ENCODE measurements at regions of chr17 and their contacts with region 1.

Region 1: GRCh38 chr17:17237026-17237799 is at the start of gene FLCN:
- DNase-seq: peak; percentile 89
- ATAC-seq: peak; percentile 90
- H3K4me3 Mint-ChIP-seq: peak within 1 kb of the TSS; percentile 96
- H3K27ac Mint-ChIP-seq: peak within 1 kb of the TSS; percentile 99
- H3K4me1 Mint-ChIP-seq: peaks cover 14% of the 10 kb centered on the region
- H3K27me3 Mint-ChIP-seq: no peaks in the 10 kb centered on the region
- CTCF ChIP-seq: no peak
- total RNA-seq, gene FLCN: 54.5 and 62.3 TPM in 2 replicates

Region 2: DNA sequence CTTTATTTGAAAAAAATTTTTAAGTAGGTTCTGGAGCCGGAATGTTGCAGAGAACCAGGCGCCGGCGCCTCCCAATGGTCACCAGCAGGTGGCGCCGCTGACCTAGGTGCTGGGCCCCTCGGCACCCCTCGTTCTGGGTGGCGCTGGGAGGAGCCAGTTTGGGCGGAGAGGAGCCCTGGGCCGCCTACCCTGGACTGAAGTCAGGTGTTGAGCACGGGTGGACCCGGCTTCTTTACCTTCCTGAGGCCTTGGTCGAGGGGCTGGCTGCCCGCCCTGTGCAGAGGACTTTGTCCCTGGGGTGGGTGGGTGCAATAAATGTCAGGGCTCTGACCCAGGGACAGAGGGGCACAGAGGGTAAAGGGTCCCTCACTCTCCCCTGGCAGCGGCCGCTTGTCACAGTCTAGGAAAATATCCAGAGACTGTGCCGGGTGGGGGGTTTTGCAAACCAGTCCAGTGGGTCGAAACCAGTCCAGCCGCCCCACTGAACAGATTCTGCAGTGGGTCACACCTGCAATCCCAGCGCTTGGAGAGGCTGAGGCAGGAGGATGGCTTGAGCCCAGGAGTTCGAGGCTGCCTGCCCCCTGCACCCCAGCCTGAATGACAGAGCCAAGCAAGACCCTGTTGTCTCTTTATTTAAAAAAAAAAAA is 235.2 kb before region 1 on chr17:
- CTCF ChIA-PET with region 1: no interaction called
- POLR2A ChIA-PET with region 1: no interaction called
- intact Hi-C with region 1: loop called (anchors 10 kb)
- DNase-seq: peak; percentile 76
- ATAC-seq: peak; percentile 97
- H3K4me3 Mint-ChIP-seq: no peak overlapping the region
- H3K27ac Mint-ChIP-seq: no peak overlapping the region
- H3K4me1 Mint-ChIP-seq: peaks cover 4% of the 10 kb centered on the region
- H3K27me3 Mint-ChIP-seq: no peaks in the 10 kb centered on the region
- CTCF ChIP-seq: peak; percentile 92

Region 3: DNA sequence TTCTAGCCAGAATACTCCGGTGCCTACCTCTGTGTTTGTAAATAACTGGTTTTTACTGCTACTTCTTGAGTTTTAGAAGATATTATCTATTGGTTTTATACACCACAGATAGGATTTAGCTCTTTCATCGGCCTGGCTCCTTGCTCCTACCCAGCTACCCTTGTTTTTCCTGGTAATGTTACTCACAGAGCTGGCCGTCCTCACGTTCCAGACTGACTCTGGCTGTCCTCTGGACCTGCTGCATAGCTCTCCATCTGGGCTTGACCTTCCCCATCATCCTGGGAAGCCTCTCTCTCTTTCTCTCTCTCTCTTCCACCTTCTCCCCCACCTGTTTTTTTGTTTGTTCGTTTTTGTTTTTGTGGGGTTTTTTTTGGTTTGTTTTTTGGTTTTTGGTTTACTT is 143.4 kb before region 1 on chr17:
- CTCF ChIA-PET with region 1: interaction called, 4 read pairs
- POLR2A ChIA-PET with region 1: interaction called, 12 read pairs
- intact Hi-C with region 1: no loop called
- DNase-seq: no peak
- ATAC-seq: no peak
- H3K4me3 Mint-ChIP-seq: no peak overlapping the region
- H3K27ac Mint-ChIP-seq: no peak overlapping the region
- H3K4me1 Mint-ChIP-seq: peaks cover 37% of the 10 kb centered on the region
- H3K27me3 Mint-ChIP-seq: no peaks in the 10 kb centered on the region
- CTCF ChIP-seq: no peak

Region 4: GRCh38 chr17:17206124-17206912 is 30.9 kb before region 1 on chr17 and contains the start of gene PLD6:
- CTCF ChIA-PET with region 1: no interaction called
- POLR2A ChIA-PET with region 1: no interaction called
- intact Hi-C with region 1: loop called (anchors 1 kb)
- DNase-seq: peak; percentile 84
- ATAC-seq: peak; percentile 81
- H3K4me3 Mint-ChIP-seq: peak within 1 kb of the TSS; percentile 87
- H3K27ac Mint-ChIP-seq: peak within 1 kb of the TSS; percentile 83
- H3K4me1 Mint-ChIP-seq: peaks cover 23% of the 10 kb centered on the region
- H3K27me3 Mint-ChIP-seq: no peaks in the 10 kb centered on the region
- CTCF ChIP-seq: no peak
- total RNA-seq, gene PLD6: 6.2 and 7.6 TPM in 2 replicates

Region 5: GRCh38 chr17:17280613-17281549 is 43.7 kb after region 1 on chr17 and contains the start of gene COPS3:
- CTCF ChIA-PET with region 1: interaction called, 3 read pairs
- POLR2A ChIA-PET with region 1: interaction called, 17 read pairs
- intact Hi-C with region 1: loop called (anchors 1 kb)
- DNase-seq: peak; percentile 95
- ATAC-seq: peak; percentile 87
- H3K4me3 Mint-ChIP-seq: peak within 1 kb of the TSS; percentile 80
- H3K27ac Mint-ChIP-seq: peak within 1 kb of the TSS; percentile 89
- H3K4me1 Mint-ChIP-seq: peaks cover 42% of the 10 kb centered on the region
- H3K27me3 Mint-ChIP-seq: no peaks in the 10 kb centered on the region
- CTCF ChIP-seq: no peak
- total RNA-seq, gene COPS3: 71.6 and 73.7 TPM in 2 replicates

Region 6: DNA sequence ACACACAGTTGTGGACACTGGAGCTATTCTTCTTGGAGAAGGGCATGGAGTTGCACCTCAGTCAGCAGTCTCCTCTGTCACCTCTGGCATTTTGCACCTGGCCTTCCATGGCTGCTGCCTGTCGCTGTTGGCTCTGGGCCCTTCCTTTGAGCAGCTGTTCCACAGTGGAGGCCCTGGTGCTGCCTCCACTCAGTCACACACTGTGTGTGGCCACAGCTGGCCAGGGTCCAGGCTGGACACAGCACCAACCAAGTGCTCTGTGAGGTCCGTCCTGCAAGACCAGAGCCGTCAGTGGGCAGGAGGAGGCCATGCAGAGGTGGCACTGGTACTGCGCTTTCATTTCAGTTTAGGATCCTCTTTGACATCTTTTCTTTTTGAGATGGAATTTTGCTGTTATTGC is 218.0 kb after region 1 on chr17:
- CTCF ChIA-PET with region 1: no interaction called
- POLR2A ChIA-PET with region 1: no interaction called
- intact Hi-C with region 1: no loop called
- DNase-seq: no peak
- ATAC-seq: no peak
- H3K4me3 Mint-ChIP-seq: no peak overlapping the region
- H3K27ac Mint-ChIP-seq: no peak overlapping the region
- H3K4me1 Mint-ChIP-seq: no peaks in the 10 kb centered on the region
- H3K27me3 Mint-ChIP-seq: no peaks in the 10 kb centered on the region
- CTCF ChIP-seq: no peak

Measured in activated B cell treated with CpG ODN at 0.5 μM for 24 hours (primary cell).